ENCODE measurements at regions of chr1 and their contacts with region 1.

Region 1: GRCh38 chr1:214637722-214638458 is 34.9 kb downstream of the CENPF start:
- DNase-seq: peak; percentile 71
- H3K4me3 Mint-ChIP-seq: no peak overlapping the region
- H3K27ac Mint-ChIP-seq: peak overlapping the region; percentile 22
- H3K4me1 Mint-ChIP-seq: no peaks in the 10 kb centered on the region
- H3K27me3 Mint-ChIP-seq: no peaks in the 10 kb centered on the region
- CTCF ChIP-seq: peak; percentile 87

Region 2: DNA sequence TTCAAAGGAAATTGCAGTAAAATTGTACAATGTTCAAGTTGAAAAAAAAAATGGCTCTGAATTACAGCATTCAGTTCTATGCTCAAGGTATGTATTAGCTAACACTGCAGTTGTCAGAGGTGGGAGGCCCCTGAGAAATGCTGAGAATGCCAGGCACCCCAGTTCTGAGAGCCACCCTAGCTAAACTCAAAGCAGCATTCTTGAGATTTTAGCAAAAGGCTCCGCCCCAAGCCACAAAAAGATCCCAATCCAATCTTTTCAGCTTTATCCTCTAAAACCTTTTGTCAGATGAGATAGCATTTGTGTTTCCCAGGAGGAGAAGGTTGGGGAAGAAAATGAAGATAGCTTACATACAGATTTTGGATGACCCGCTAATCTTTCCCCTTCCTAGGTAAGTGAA is 288.1 kb before region 1 on chr1:
- CTCF ChIA-PET with region 1: interaction called, 27 read pairs
- POLR2A ChIA-PET with region 1: no interaction called
- intact Hi-C with region 1: no loop called
- DNase-seq: no peak
- H3K4me3 Mint-ChIP-seq: no peak overlapping the region
- H3K27ac Mint-ChIP-seq: peak overlapping the region; percentile 23
- H3K4me1 Mint-ChIP-seq: no peaks in the 10 kb centered on the region
- H3K27me3 Mint-ChIP-seq: no peaks in the 10 kb centered on the region
- CTCF ChIP-seq: no peak

Region 3: DNA sequence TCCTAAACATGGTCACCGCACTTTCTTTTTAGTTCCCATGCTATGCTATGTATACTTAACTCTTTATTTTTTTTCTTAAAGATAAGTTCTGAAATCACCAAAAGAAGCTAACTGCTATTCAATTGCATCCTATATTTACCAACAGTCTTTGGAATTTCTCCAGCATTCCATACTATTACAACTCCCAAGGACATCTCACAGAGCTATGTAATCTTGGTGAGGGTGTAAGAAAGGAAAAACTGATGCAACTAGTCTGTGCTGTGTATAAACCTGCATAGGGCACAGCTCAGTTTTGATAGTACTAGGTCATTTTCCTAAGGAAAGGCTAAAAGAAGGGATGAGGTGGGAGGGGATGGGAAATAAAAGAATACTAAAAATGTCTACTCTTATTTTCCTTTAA is 164.5 kb before region 1 on chr1:
- CTCF ChIA-PET with region 1: no interaction called
- POLR2A ChIA-PET with region 1: no interaction called
- intact Hi-C with region 1: no loop called
- DNase-seq: peak; percentile 77
- H3K4me3 Mint-ChIP-seq: peak overlapping the region; percentile 9
- H3K27ac Mint-ChIP-seq: peak overlapping the region; percentile 88
- H3K4me1 Mint-ChIP-seq: peaks cover 88% of the 10 kb centered on the region
- H3K27me3 Mint-ChIP-seq: no peaks in the 10 kb centered on the region
- CTCF ChIP-seq: no peak

Region 4: DNA sequence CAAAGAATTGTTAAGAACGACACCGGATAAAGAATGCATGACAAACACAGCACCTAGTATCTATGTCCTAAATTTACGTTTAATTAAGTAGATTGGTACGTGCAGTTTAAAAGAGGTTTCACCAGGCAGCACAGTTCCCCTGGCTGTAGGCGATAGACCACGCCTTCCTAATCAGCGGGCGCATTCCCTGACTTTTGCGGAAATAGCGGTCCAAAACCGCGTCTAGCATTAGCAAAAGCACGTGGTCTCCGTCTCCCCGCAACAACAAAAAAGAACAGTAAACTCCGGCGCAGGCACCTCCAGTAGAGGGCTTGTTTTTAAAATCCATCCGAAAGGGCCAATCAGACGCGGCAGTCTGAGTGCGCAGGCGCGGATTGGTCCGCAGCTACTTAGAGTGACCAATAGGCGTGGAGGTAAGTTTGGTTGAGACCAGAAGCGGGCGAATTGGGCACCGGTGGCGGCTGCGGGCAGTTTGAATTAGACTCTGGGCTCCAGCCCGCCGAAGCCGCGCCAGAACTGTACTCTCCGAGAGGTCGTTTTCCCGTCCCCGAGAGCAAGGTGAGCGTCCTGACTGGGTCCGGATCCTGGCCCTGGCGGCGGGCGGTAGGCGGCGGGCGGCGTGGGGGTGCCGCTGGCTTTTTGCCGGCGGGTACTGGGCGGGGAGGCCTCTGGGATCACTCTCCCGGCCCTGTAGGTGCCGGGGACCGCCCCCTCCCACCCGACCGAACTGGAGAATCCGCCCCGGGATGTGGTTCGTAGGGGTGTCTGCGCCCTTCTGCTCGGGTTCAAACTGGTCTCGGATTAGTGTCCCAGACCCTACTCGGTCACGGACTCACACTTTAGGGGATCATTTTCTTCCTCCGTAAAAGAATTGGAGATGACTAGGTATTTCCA is 34.9 kb before region 1 on chr1 and contains the start of gene CENPF:
- CTCF ChIA-PET with region 1: interaction called, 28 read pairs
- POLR2A ChIA-PET with region 1: no interaction called
- intact Hi-C with region 1: no loop called
- DNase-seq: peak; percentile 100
- H3K4me3 Mint-ChIP-seq: peak within 1 kb of the TSS; percentile 96
- H3K27ac Mint-ChIP-seq: peak within 1 kb of the TSS; percentile 94
- H3K4me1 Mint-ChIP-seq: peaks cover 16% of the 10 kb centered on the region
- H3K27me3 Mint-ChIP-seq: no peaks in the 10 kb centered on the region
- CTCF ChIP-seq: peak; percentile 28
- total RNA-seq, gene CENPF: 88.8 and 135 TPM in 2 replicates

Region 5: GRCh38 chr1:214648801-214649200 is 10.9 kb after region 1 on chr1:
- CTCF ChIA-PET with region 1: interaction called, 197 read pairs
- POLR2A ChIA-PET with region 1: interaction called, 6 read pairs
- intact Hi-C with region 1: no loop called
- DNase-seq: no peak
- H3K4me3 Mint-ChIP-seq: no peak overlapping the region
- H3K27ac Mint-ChIP-seq: no peak overlapping the region
- H3K4me1 Mint-ChIP-seq: no peaks in the 10 kb centered on the region
- H3K27me3 Mint-ChIP-seq: no peaks in the 10 kb centered on the region
- CTCF ChIP-seq: no peak

Region 6: GRCh38 chr1:214678378-214678777 is 40.5 kb after region 1 on chr1:
- CTCF ChIA-PET with region 1: interaction called, 10 read pairs
- POLR2A ChIA-PET with region 1: no interaction called
- intact Hi-C with region 1: no loop called
- DNase-seq: peak; percentile 28
- H3K4me3 Mint-ChIP-seq: no peak overlapping the region
- H3K27ac Mint-ChIP-seq: no peak overlapping the region
- H3K4me1 Mint-ChIP-seq: no peaks in the 10 kb centered on the region
- H3K27me3 Mint-ChIP-seq: no peaks in the 10 kb centered on the region
- CTCF ChIP-seq: no peak

Region 7: DNA sequence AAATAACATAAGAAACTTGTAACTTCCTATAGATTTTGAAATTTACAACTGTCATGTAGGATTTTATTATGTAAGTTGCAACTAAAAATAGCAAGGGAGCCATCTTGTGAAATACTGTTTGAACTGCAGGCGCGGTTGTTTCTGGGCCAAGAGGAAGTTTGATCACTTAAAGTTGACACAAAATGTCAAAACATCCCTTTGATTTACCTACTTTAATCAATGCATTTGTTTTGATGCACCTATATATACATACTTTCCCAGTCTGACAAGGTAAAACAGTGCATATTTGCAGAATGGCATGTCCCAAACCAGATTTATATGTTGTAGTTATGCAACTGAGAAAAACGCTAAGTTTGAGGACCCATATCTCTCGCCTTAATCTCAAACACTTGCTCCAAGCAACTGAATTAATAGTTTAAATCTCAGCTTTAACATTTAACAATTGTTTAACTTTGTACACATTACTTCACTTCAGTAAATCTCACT is 508.5 kb after region 1 on chr1:
- CTCF ChIA-PET with region 1: interaction called, 41 read pairs
- POLR2A ChIA-PET with region 1: no interaction called
- intact Hi-C with region 1: no loop called
- DNase-seq: peak; percentile 77
- H3K4me3 Mint-ChIP-seq: no peak overlapping the region
- H3K27ac Mint-ChIP-seq: no peak overlapping the region
- H3K4me1 Mint-ChIP-seq: no peaks in the 10 kb centered on the region
- H3K27me3 Mint-ChIP-seq: no peaks in the 10 kb centered on the region
- CTCF ChIP-seq: peak; percentile 98

Region 8: GRCh38 chr1:215526553-215527151 is 888.8 kb after region 1 on chr1:
- CTCF ChIA-PET with region 1: interaction called, 160 read pairs
- POLR2A ChIA-PET with region 1: interaction called, 5 read pairs
- intact Hi-C with region 1: no loop called
- DNase-seq: peak; percentile 80
- H3K4me3 Mint-ChIP-seq: no peak overlapping the region
- H3K27ac Mint-ChIP-seq: no peak overlapping the region
- H3K4me1 Mint-ChIP-seq: peaks cover 12% of the 10 kb centered on the region
- H3K27me3 Mint-ChIP-seq: no peaks in the 10 kb centered on the region
- CTCF ChIP-seq: peak; percentile 86